HepG2 (cell line): ENCODE measurements at regions of chr12 and their contacts with region 1.

Region 1: DNA sequence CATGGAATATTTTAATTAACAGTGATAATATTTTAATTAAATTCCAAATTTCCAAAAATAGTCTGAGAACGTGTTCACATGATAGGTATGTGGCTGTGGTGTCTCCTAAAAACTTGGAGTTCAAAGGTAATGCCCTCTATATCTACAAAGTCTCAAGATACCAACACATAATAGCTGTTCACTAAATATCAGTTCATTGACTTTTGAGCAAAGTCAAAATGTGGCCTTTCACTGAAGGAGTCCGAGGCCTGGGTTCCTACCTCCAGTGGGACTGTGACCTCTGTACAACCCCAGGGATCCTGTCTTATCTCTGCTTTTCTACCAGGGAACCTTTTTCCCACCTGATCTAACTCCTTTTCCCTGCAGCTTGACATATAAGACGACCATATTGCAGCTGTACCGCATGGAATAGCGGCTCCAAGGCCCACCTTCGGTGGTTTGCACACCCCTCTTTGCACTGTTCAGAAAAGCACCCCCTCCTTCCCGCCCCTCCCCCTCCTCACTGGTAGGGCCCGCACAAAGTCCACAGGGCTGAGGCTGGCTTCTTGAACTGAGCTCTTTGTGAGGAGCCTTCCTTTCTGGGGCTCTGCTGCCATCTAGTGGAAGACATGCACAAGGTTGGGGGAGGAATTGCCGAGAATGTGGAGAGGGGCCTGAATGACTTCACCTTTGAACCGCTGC is 3.1 kb downstream of the CCND2 start:
- DNase-seq: peak; percentile 85
- ATAC-seq: peak; percentile 83
- H3K4me3 ChIP-seq: no peak overlapping the region
- H3K27ac ChIP-seq: no peak overlapping the region
- H3K4me1 ChIP-seq: peaks cover 47% of the 10 kb centered on the region
- H3K27me3 ChIP-seq: peaks cover 21 to 68% of the 10 kb centered on the region in 2 experiments; a peak in 4 of 5 replicates
- CTCF ChIP-seq: peak; percentile 96
- EP300 ChIP-seq: no peak
- POLR2A ChIP-seq: no peak
- RAD21 ChIP-seq: peak; percentile 88

Region 2: DNA sequence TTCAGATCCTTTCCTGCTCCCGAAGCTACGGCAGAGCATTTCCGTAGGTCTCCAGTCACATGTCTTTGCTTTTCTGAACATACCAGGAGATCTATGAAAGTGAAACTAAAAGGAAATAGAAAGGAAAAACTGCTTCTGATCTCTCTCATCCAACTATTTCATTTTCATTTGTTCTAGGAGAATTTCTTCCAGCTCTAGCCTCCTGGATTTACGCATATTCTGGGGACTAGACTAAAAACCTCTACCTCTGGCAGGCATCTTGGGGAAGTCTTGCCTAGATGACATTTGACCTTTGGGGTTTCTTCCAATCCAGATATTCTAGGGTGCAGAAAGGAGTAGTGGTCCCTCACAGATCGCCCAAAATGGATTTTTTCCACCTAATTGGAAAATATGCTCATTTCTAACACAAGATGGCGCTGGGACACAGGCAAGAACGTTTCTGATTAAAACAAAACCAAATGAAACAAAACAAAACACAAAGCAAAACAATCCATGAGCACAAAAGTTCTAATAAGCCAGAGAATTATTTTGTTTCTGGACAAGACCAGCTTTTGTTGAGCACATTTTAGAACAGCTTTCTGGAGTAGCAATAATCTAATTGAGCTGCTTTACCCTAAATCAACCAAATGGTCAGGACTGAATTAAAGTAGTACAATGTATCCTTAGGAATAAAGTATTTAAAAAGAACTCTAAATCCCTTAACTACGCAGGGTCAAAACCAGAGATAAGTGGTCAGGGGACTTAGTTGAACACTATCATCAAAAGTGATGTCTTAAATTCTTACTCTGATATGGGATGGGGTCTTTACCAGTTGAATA is 391.2 kb before region 1 on chr12:
- CTCF ChIA-PET with region 1: interaction called, 20 read pairs
- POLR2A ChIA-PET with region 1: no interaction called
- in situ Hi-C with region 1: loop called (anchors 5 kb)
- intact Hi-C with region 1: loop called (anchors 1 kb)
- DNase-seq: peak; percentile 36
- ATAC-seq: no peak
- H3K4me3 ChIP-seq: no peak overlapping the region
- H3K27ac ChIP-seq: no peak overlapping the region
- H3K4me1 ChIP-seq: 0 out of 2 replicates have a peak, but pooled peaks cover 6% of the 10 kb centered on the region
- H3K27me3 ChIP-seq: no peaks in the 10 kb centered on the region; a peak in 2 of 5 replicates
- CTCF ChIP-seq: peak; percentile 78
- EP300 ChIP-seq: no peak
- POLR2A ChIP-seq: no peak
- RAD21 ChIP-seq: peak; percentile 74

Region 3: DNA sequence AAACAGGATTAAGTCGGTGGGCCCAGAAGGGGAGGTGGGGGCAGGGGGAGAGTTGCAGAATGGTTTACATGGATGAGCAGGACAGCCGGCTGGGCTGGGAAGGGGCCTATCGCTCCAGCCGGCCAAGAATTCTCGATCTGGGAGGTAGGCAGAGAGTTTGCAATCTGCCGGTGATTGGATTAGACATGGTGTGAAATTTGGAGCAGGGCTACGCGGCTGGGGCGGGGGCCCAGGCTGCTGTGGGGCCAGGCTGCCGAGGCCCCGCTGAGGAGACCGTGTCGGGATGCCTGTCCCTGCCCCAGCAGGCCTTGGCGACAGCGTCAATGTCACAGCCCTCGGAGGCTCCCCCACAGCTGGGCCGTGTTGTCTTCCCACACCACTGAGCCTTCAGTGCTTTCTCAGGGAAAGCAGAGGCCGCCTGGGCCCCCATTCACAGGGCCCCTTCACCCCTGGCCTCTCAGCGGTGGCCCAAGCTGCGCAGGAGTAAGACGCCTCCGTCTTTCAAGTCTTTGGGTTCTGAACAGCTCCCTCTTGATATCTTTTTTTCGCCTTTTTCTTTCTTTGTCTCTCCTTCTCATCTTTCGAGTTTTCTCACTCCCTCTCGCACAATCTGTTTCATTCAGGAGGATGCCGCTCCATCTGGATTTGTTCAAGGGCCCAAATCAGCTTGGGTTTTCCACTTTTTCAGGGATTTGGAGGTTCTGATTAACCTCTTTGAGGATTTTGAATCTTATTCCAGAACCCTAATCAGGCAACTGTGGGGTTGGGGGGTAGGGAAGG is 286.0 kb before region 1 on chr12:
- CTCF ChIA-PET with region 1: interaction called, 10 read pairs
- POLR2A ChIA-PET with region 1: interaction called, 5 read pairs
- in situ Hi-C with region 1: loop called (anchors 5 kb)
- intact Hi-C with region 1: loop called (anchors 5 kb)
- DNase-seq: no peak
- ATAC-seq: no peak
- H3K4me3 ChIP-seq: no peak overlapping the region
- H3K27ac ChIP-seq: no peak overlapping the region
- H3K4me1 ChIP-seq: peaks cover 29% of the 10 kb centered on the region
- H3K27me3 ChIP-seq: no peaks in the 10 kb centered on the region; a peak in 1 of 5 replicates
- CTCF ChIP-seq: no peak
- EP300 ChIP-seq: no peak
- POLR2A ChIP-seq: no peak
- RAD21 ChIP-seq: no peak

Region 4: DNA sequence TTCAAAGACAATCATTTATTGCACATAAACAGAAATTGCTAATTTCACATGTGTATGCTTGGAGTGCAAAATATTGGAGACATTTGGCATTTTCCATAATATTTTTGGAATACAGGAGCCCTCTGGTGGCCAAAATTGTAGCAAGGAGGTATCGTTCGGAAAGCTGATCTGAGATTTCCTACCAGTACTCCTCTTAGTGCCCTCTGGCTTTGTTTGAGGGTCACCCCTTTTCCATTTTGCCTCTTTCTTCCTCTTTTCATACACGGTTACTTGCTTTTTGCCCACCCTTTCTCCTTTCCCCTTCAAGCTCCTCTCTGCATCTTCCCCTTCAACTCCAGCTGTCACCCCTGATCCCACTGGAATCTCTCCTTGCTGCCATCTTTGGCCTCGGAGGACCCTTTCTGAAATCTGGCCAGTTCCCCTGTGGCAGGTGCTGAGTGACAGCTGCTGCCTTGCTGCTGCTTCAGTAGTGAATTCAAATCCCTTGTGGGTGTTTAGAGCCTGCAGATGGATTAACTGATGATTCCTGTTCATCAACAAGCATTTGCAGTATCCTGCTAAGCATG is 238.8 kb before region 1 on chr12:
- CTCF ChIA-PET with region 1: interaction called, 3 read pairs
- POLR2A ChIA-PET with region 1: no interaction called
- in situ Hi-C with region 1: no loop called
- intact Hi-C with region 1: loop called (anchors 2 kb)
- DNase-seq: peak; percentile 44
- ATAC-seq: peak; percentile 35; the same call in 1 of the 3 replicates
- H3K4me3 ChIP-seq: no peak overlapping the region
- H3K27ac ChIP-seq: no peak overlapping the region
- H3K4me1 ChIP-seq: peaks cover 48% of the 10 kb centered on the region
- H3K27me3 ChIP-seq: no peaks in the 10 kb centered on the region
- CTCF ChIP-seq: peak; percentile 78
- EP300 ChIP-seq: no peak
- POLR2A ChIP-seq: no peak
- RAD21 ChIP-seq: peak; percentile 80